Activated T-helper 2 cell treated with anti-CD3 and anti-CD28 coated beads, Interferon-gamma antibody, Interleukin-2, Interleukin-4, amounts not matched to agents 10 μg/mL and 5 μg/mL and 100 μg/mL, durations not matched to agents 14 hours and 24 hours and 36 hours (primary cell): ENCODE measurements at regions of chr16 and their contacts with region 1.

Region 1: GRCh38 chr16:20849587-20850390 is 43.5 kb downstream of the REXO5 start:
- DNase-seq: peak; percentile 49
- H3K4me3 Mint-ChIP-seq: no peak overlapping the region
- H3K27ac Mint-ChIP-seq: peak overlapping the region; percentile 49
- H3K4me1 Mint-ChIP-seq: peaks cover 26% of the 10 kb centered on the region
- H3K27me3 Mint-ChIP-seq: no peaks in the 10 kb centered on the region

Region 2: DNA sequence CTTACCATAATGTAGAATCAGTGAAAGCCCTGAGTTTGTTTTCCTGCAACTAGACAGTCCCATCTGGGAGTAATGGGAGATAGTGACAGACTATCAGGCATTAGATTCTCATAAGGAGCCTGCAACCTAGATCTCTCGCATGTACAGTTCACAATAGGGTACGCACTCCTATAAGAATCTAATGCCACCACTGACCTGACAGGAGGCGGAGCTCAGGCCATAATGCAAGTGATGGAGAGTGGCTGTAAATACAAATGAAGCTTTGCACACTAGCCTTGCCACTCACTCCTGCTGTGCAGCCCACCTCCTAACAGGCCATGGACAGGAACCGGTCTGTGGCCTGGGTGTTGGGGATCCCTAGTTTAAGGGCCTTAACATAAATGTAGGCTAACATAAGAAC is 129.5 kb before region 1 on chr16:
- intact Hi-C with region 1: no loop called
- DNase-seq: no peak
- H3K4me3 Mint-ChIP-seq: no peak overlapping the region
- H3K27ac Mint-ChIP-seq: no peak overlapping the region
- H3K4me1 Mint-ChIP-seq: no peaks in the 10 kb centered on the region
- H3K27me3 Mint-ChIP-seq: no peaks in the 10 kb centered on the region

Region 3: GRCh38 chr16:20879175-20880040 is 29.6 kb after region 1 on chr16:
- intact Hi-C with region 1: loop called (anchors 5 kb)
- DNase-seq: no peak
- H3K4me3 Mint-ChIP-seq: no peak overlapping the region
- H3K27ac Mint-ChIP-seq: peak overlapping the region; percentile 76
- H3K4me1 Mint-ChIP-seq: peaks cover 77% of the 10 kb centered on the region
- H3K27me3 Mint-ChIP-seq: no peaks in the 10 kb centered on the region

Region 4: DNA sequence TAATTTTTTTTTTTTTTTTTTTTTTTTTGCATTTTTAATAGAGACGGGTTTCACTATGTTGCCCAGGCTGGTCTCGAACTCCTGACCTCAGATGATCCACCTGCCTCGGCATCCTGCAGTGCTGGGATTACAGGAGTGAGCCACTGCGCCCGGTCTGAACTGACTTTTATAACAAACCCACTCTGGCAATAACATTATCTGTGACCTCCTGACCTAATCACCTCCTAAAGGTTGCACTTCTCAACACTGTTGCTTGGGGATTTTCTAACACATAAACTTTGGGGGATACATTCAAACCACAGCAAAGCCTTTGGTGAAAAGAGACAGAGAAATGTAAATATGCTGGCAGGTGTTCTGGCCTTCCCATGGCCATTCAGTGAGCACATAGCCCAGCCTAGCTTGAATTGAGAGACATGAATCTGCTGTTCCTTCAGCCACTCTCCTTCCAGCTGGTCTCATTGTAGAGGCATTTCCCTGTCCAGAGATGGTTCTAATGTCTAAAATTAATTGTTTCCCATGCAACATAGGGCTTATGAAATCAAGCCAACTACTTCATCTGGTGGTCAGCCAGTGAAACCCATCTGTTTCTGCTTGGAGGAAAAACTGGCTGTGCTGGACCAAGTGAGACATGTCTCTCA is 79.1 kb after region 1 on chr16:
- intact Hi-C with region 1: no loop called
- DNase-seq: no peak
- H3K4me3 Mint-ChIP-seq: no peak overlapping the region
- H3K27ac Mint-ChIP-seq: no peak overlapping the region
- H3K4me1 Mint-ChIP-seq: no peaks in the 10 kb centered on the region
- H3K27me3 Mint-ChIP-seq: no peaks in the 10 kb centered on the region

Region 5: DNA sequence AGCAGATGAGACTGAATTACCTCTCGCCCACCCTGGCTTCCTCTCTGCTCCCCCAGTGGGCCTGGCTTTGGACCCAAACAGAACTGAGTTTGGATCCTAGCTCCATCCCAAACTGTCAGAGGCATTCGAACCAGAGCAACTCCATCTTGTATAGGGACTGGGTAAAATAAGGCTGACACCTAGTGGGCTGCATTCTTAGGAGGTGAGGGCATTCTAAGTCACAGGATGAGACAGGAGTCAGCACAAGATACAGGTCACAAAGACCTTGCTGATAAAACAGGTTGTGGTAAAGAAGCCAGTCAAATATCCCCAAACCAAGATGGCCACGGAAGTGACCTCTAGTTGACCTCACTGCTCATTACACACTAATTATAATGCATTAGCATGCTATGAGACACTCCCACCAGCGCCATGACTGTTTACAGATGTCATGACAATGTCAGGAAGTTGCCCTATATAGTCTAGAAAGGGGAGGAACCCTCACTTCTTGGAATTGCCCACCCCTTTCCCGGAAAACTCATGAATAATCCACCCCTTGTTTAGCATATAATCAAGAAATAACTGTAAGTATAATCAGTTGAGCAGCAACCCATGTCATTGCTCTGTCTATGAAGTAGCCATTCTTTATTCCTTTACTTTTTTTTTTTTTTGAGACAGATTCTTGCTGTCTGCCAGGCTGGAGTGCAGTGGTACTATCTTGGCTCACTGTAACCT is 95.2 kb after region 1 on chr16:
- intact Hi-C with region 1: loop called (anchors 2 kb)
- DNase-seq: peak; percentile 69
- H3K4me3 Mint-ChIP-seq: no peak overlapping the region
- H3K27ac Mint-ChIP-seq: peak overlapping the region; percentile 83
- H3K4me1 Mint-ChIP-seq: peaks cover 51% of the 10 kb centered on the region
- H3K27me3 Mint-ChIP-seq: peaks cover 4% of the 10 kb centered on the region

Region 6: DNA sequence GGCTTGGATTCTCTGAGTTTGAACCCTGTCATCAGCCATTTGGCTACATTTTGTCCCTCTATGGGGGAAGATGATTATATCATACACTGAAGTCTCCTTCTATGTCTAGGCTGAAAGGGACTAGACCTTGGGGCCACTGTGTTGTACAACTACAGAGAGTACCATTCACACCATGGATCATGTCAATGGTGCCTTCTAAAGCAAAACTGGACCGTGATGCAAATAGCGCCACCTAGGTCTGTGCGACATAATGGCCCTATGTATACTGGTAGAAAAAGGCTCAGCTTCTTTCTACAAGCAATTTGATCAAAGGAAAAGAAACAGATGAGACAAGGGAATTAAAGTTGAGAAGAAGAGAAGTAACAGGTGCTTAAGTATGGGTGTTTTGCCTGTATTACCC is 151.5 kb after region 1 on chr16:
- intact Hi-C with region 1: loop called (anchors 2 kb)
- DNase-seq: no peak
- H3K4me3 Mint-ChIP-seq: no peak overlapping the region
- H3K27ac Mint-ChIP-seq: no peak overlapping the region
- H3K4me1 Mint-ChIP-seq: peaks cover 3% of the 10 kb centered on the region
- H3K27me3 Mint-ChIP-seq: peaks cover 10% of the 10 kb centered on the region

Region 7: GRCh38 chr16:21083729-21084268 is 234.0 kb after region 1 on chr16:
- intact Hi-C with region 1: loop called (anchors 1 kb)
- DNase-seq: peak; percentile 26
- H3K4me3 Mint-ChIP-seq: no peak overlapping the region
- H3K27ac Mint-ChIP-seq: no peak overlapping the region
- H3K4me1 Mint-ChIP-seq: no peaks in the 10 kb centered on the region
- H3K27me3 Mint-ChIP-seq: peaks cover 13% of the 10 kb centered on the region

Region 8: DNA sequence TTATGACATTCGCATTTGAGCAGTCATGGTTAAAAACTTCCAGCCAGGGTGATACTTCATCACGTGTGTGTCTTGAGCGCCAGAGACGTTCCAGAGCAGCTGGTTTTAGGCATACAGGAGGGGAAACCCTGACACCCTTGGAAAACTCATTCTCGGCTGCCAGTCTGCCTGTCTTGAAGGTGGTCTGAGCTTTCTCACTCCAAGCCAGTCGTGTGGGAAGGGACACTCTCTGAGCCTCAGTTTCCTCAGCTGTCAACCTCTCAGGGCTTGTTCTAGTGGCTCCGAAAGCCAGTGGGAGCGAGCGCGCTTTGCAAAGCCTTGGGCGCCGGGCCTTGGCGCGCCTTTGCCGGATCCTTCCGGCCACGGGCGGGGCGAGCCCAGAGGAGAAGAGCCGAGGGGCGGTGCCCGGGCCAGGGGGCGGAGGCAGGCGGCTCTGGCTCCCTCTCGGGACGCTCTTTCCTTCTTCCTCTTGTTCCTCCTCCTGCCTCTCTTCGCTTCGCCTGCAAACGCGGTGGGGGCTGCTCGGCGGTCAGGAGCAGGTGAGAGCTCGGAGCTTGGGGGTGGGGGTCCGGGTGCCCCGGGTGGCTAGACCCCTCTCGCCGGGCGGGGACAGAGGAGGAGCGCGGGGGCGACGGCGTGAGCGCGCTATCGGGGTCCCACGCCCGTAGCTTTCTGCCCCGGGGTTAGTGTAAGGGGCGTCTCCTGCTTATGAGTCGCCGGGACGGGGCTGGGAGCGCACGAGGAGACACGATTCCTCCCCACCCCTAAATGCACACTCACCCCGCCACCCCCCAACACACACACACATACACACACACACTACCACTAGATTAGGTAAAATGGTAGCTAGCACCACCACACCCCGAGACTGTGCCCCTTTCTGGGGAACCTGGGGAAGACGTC is 308.7 kb after region 1 on chr16 and contains the start of gene LDAF1:
- intact Hi-C with region 1: loop called (anchors 10 kb)
- DNase-seq: peak; percentile 73
- H3K4me3 Mint-ChIP-seq: peak within 1 kb of the TSS; percentile 89
- H3K27ac Mint-ChIP-seq: peak within 1 kb of the TSS; percentile 53
- H3K4me1 Mint-ChIP-seq: peaks cover 19% of the 10 kb centered on the region
- H3K27me3 Mint-ChIP-seq: no peaks in the 10 kb centered on the region
- total RNA-seq, gene LDAF1: 10.4 and 10.5 TPM in 2 replicates